ENCODE measurements at regions of chr17 and their contacts with region 1.

Region 1: GRCh38 chr17:49575579-49576087 is at the start of gene NXPH3:
- DNase-seq: peak; percentile 50
- H3K4me3 ChIP-seq: peak within 1 kb of the TSS; percentile 40
- H3K27ac ChIP-seq: peak within 1 kb of the TSS; percentile 55
- H3K4me1 ChIP-seq: peaks cover 6% of the 10 kb centered on the region
- H3K27me3 ChIP-seq: peaks cover 36% of the 10 kb centered on the region
- CTCF ChIP-seq: no peak
- total RNA-seq, gene NXPH3: 0.42 to 2.1 TPM

Region 2: DNA sequence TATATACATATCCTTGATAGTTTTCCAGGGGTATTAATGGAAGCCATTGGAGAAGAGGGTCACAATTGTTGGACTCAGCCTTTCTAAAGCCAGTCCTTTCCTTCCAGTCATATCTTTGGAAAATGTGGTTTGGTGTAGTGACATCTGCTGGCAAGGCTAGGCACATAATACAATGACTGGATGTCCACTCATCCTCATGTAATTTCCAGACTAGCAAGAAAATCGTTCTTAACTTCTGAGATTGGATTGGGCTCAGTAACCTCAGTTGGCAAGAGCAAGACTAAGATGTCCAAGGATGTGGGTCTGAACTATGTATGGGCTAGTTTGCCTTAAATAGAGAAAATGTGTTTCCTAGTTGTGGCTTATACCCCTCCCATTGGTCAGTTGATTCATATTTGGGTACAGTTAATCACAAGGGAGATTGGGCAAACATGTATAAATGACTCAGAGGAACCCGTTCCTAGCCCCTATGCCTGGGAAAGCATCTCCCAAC is 204.2 kb after region 1 on chr17:
- intact Hi-C with region 1: loop called (anchors 5 kb)
- DNase-seq: peak; percentile 29
- H3K4me3 ChIP-seq: no peak overlapping the region
- H3K27ac ChIP-seq: peak overlapping the region; percentile 11
- H3K4me1 ChIP-seq: no peaks in the 10 kb centered on the region
- H3K27me3 ChIP-seq: no peaks in the 10 kb centered on the region
- CTCF ChIP-seq: peak; percentile 28

Region 3: GRCh38 chr17:49851387-49852291 is 276.0 kb after region 1 on chr17:
- intact Hi-C with region 1: loop called (anchors 5 kb)
- DNase-seq: peak; percentile 73
- H3K4me3 ChIP-seq: peak overlapping the region; percentile 40
- H3K27ac ChIP-seq: no peak overlapping the region
- H3K4me1 ChIP-seq: no peaks in the 10 kb centered on the region
- H3K27me3 ChIP-seq: no peaks in the 10 kb centered on the region
- CTCF ChIP-seq: peak; percentile 42